Activated T-helper 1 cell treated with anti-CD3 and anti-CD28 coated beads, Interleukin-12 subunit alpha, Interleukin-12 subunit beta, Interleukin-2, Interleukin-4 antibody, amounts not matched to agents 30 ng/mL and 10 ng/mL and 1 ng/mL, durations not matched to agents 14 hours and 24 hours and 36 hours (primary cell): ENCODE measurements at regions of chr19 and their contacts with region 1.

Region 1: GRCh38 chr19:38263689-38264485 is 486 bp upstream of the SPINT2 start:
- DNase-seq: peak; percentile 74
- H3K4me3 Mint-ChIP-seq: peak overlapping the region; percentile 90
- H3K27ac Mint-ChIP-seq: peak overlapping the region; percentile 98
- H3K4me1 Mint-ChIP-seq: peaks cover 51% of the 10 kb centered on the region
- H3K27me3 Mint-ChIP-seq: no peaks in the 10 kb centered on the region

Region 2: GRCh38 chr19:38245826-38246498 is 17.9 kb before region 1 on chr19:
- intact Hi-C with region 1: loop called (anchors 2 kb)
- DNase-seq: no peak
- H3K4me3 Mint-ChIP-seq: no peak overlapping the region
- H3K27ac Mint-ChIP-seq: no peak overlapping the region
- H3K4me1 Mint-ChIP-seq: peaks cover 10% of the 10 kb centered on the region
- H3K27me3 Mint-ChIP-seq: no peaks in the 10 kb centered on the region

Region 3: DNA sequence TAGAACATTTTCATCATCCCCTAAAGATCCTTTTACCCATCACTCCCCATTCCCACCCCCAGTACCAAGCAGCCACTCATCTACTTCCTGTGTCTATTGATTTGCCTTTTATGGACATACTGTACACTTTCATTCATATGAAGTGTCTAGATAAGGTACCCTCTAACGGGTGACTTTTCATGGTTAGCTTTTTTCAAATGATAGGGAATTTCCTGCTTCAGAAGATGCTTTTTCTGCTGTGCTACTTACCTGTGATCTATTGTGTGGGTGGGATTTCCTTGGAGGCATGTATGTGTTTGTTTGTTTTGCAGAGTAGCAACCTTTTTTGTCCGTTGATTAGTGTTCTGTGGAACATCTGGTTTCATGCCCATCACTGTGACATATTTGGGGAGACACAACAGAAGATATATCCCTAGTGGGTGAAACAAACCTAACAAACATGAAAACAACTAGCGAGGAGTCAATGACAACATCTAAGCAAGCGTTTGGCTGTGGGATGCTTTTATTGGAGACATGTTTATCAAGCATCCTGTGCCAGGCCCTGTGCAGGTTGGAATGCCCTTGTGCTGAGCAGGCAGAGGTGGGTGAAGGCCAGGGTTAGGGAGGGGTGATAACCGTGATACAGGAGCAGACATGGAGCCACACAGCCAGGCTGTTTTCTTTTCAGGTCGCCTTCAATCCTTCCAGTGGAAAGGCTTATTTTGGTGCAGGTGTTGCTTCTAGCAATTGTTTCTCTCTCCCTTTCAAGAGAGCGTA is 18.1 kb after region 1 on chr19:
- intact Hi-C with region 1: loop called (anchors 1 kb)
- DNase-seq: no peak
- H3K4me3 Mint-ChIP-seq: no peak overlapping the region
- H3K27ac Mint-ChIP-seq: peak overlapping the region; percentile 95
- H3K4me1 Mint-ChIP-seq: peaks cover 24% of the 10 kb centered on the region
- H3K27me3 Mint-ChIP-seq: no peaks in the 10 kb centered on the region